ENCODE measurements at regions of chr19 and their contacts with region 1.

Region 1: DNA sequence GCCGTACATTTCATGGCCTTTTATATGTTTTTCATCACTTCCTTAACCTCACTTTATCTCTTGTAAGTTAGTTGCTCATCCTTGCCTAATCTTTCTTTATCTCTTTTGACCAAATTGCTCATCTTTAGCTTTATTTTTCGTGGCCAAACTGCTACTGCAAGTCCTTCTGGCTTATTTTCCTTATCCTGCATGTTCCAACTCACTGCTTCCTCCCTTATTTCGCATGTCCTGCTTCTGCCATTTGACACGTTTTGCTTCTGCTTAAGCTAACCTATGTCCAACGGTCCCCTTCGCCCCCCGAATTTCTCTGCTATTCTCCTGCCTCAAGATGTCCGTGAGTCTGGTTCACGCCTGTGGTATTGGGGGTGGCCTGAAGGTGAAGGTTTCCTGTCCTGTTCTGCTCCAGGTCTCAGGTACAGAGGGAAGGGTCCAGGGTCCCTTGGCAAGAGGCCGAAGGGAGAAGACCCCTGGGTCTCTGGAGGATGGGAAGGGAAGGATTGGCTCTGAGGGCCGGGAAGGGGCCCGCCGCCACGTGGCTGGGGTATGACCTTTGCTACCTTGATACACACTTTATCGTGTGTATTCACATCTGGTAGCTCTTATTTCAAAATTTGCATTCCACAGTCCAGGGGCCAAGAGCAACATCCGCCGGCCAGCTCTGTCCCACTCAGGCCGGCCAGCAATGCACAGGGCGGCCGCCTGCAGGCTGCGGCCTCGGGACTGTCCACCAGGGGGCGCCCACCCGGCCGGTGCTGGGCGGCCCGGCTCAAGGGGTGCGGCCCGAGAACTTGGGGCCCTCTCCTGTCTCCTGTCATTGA is 2.9 kb upstream of the C19orf85 start:
- DNase-seq: peak in 4 of 5 donors; percentile 52 to 61 (median 52)
- H3K4me3 ChIP-seq: no peak overlapping the region
- H3K4me3 Mint-ChIP-seq: peak overlapping the region in 1 of 8 donors; percentile 36
- H3K27ac ChIP-seq: no peak overlapping the region
- H3K27ac Mint-ChIP-seq: peak overlapping the region in 3 of 7 donors; percentile 30 to 38 (median 34)
- H3K4me1 ChIP-seq: peaks cover 2% of the 10 kb centered on the region
- H3K4me1 Mint-ChIP-seq: peaks cover 2 to 7% (median 4%) of the 10 kb centered on the region in 4 donors
- H3K27me3 ChIP-seq: no peaks in the 10 kb centered on the region
- H3K27me3 Mint-ChIP-seq: no peaks in the 10 kb centered on the region

Region 2: DNA sequence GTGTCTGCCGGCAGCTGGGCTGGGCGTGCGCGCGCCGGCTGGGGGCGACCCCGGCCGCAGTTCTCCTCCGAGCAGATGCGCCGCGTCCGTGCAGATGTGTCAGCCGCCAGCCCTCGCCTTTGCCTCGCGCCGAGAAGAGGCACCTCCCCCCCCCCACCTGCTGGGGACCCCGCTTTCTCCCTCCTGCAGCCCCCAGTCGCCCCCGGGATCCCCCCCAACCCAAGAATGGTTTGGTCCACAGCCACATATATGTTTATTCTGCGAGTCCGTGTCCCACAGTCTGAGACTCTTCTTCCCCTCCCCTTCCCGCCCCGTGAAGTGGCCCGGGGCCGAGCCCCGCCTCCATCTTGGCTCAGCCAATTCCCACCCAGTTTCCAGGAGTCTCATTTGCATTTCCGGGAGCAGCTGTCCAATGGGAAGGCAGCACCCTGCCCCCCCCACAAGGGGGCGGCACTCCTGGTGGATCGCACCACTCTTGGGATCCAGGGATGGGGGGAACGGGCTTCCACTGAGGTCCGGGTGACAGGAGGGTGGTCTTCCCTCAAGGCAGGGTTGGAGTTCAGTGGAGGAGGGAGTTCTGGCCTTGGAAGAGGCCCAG is 14.6 kb before region 1 on chr19:
- CTCF ChIA-PET with region 1: interaction called, 15 read pairs
- POLR2A ChIA-PET with region 1: no interaction called
- intact Hi-C with region 1: no loop called
- DNase-seq: peak in 3 of 5 donors; percentile 23 to 59 (median 32)
- H3K4me3 ChIP-seq: no peak overlapping the region
- H3K4me3 Mint-ChIP-seq: peak overlapping the region in 3 of 8 donors; percentile 56 to 78 (median 75)
- H3K27ac ChIP-seq: no peak overlapping the region
- H3K27ac Mint-ChIP-seq: no peak overlapping the region
- H3K4me1 ChIP-seq: peaks cover 10% of the 10 kb centered on the region
- H3K4me1 Mint-ChIP-seq: peaks cover 5 to 20% (median 15%) of the 10 kb centered on the region in 4 donors
- H3K27me3 ChIP-seq: no peaks in the 10 kb centered on the region
- H3K27me3 Mint-ChIP-seq: peaks cover 12 to 18% of the 10 kb centered on the region in 2 donors

Region 3: DNA sequence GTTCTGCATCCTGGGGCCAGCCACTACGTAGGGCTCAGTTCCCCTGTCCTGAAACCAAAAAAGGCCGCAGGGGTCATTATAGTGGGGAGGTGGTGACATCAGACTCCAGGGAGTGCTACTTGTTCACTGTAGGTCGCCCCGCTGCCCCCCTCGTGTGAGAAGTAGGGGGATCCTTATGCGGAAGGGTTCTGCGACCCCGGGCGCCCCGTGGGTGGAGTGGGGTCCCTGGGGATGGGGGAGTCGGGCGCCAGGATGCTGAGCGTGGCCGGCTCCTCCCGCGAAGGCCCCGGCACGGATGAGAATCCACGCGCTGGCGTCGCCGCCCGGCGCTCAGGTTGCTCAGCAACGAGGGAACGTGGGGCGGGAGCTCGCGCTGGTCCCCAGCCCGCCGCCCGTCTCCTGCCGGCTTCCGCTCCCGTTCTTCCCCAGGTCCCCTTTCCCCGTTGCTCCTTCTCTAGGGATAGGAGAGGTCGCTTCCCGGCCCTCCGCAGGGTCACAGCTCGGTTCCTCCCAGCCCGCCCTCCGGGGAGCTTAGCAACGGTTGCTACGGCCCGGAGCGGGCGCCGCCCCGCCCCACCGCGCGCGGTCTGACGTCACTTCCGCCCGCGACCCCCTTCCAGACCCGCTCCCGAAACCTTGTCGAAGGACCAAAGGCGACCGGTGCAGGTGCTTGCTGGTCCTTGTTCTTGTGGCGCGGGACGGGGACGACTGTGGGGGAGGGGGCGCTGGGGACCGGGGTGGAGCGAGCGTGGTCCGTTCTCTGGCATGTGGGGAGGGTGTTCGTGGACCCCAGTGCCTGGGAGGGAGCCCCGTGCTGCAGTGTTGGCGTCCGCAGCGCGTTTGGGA is 17.4 kb after region 1 on chr19 and contains the start of gene NAT14:
- CTCF ChIA-PET with region 1: interaction called, 11 read pairs
- POLR2A ChIA-PET with region 1: interaction called, 7 read pairs
- intact Hi-C with region 1: no loop called
- DNase-seq: peak; percentile 60 to 72 (median 72)
- H3K4me3 ChIP-seq: peak within 1 kb of the TSS in 1 of 2 donors; percentile 68
- H3K4me3 Mint-ChIP-seq: peak within 1 kb of the TSS; percentile 73 to 81 (median 78)
- H3K27ac ChIP-seq: peak within 1 kb of the TSS; percentile 59
- H3K27ac Mint-ChIP-seq: peak within 1 kb of the TSS; percentile 67 to 98 (median 91)
- H3K4me1 ChIP-seq: peaks cover 13% of the 10 kb centered on the region
- H3K4me1 Mint-ChIP-seq: peaks cover 5 to 13% (median 7%) of the 10 kb centered on the region in 4 donors
- H3K27me3 ChIP-seq: no peaks in the 10 kb centered on the region
- H3K27me3 Mint-ChIP-seq: peaks cover 0 to 2% of the 10 kb centered on the region in 2 donors
- total RNA-seq, gene NAT14: 2.7 to 3.1 TPM